WTC11 (cell line): ENCODE measurements at regions of chr22 and their contacts with region 1.

Region 1: DNA sequence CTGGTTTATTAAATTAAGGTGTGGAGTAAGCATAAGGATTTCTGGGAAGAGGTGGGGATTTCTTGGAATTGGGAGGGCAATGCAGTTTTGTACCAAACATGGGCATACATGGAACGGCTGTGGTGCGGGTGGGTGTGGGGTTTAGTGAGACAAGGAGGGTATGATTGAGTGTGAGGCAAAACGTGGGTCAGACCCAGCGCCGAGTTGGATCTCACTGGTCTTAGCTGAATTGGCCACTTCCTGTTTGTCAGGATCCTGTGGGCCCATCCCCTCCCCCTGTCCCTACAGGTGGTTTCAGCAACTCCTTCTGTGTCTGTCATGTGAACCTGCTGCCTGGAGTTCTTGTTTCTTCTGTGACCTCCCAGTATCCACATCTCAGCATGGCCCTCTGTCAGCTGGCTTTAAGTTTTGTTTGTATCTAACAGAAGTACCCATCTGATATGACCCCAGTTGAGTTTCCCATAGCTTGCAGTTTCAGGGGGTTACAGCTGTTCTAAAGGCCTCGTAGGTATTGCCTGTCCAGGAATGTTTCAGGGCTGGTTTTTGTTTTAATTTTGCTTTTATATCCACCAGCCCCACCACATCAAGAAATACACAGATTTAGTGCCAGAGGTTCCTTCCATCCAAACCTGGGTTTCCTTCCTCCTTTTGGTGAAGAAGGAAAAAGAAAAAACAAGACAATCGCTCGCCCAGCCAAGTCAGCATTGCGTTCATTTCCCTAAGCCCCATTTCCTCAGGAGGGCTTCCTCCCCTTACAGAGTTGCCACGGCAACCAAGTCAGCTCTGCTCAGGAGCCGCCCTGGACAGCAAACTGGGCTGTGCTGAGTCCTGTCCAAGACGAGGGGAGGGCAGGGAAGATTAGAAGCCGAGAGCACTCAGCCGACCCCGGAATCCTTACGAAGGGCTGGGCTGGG is 6.0 kb downstream of the APOL1 start:
- DNase-seq: peak; percentile 64
- ATAC-seq: peak; percentile 90
- H3K4me3 Mint-ChIP-seq: peak overlapping the region; percentile 25
- H3K27ac Mint-ChIP-seq: peak overlapping the region; percentile 94
- H3K4me1 Mint-ChIP-seq: peaks cover 35% of the 10 kb centered on the region
- H3K27me3 Mint-ChIP-seq: no peaks in the 10 kb centered on the region; the same call in 1 of the 2 replicates
- CTCF ChIP-seq: no peak

Region 2: DNA sequence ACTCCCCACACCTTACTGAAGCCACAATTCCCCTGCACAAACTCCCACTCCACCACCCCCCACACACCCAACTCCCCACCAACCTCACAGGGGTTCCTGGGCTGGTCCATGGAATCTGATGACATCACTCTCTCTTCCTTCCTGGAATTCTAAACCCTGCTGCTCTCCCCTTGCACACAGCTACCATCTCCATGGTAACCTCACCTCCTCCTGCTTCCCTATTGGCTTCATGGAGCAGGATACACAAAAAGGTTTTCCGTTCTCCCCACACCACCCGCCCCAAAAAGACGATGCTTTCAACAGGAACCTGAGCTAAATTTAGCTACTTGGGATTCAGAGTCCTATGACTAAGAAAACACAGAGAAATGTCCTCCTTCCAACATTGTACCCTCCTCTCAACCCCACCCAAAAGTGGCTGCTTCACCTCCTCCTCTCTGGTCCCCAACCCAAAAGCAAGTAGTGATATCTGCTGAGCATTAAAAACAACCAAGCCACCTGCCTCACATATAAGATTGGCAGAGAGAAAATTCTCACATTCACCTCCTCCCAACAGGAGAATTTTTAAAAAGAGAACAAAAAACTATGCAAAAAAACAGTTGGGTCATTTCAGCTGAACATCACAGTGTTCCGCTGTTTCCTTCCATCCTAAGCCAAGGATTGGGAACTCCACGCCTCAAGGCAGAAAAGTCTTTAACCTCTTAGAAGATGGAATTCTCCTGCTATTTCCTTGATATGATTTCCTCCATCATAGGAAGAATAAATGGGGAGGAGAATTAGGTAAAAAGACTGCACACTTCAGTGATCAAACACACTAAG is 297.3 kb before region 1 on chr22:
- CTCF ChIA-PET with region 1: no interaction called
- POLR2A ChIA-PET with region 1: no interaction called
- DNase-seq: peak; percentile 60
- ATAC-seq: peak; percentile 99
- H3K4me3 Mint-ChIP-seq: peak overlapping the region; percentile 32
- H3K27ac Mint-ChIP-seq: peak overlapping the region; percentile 91
- H3K4me1 Mint-ChIP-seq: peaks cover 48% of the 10 kb centered on the region
- H3K27me3 Mint-ChIP-seq: no peaks in the 10 kb centered on the region
- CTCF ChIP-seq: no peak

Region 3: DNA sequence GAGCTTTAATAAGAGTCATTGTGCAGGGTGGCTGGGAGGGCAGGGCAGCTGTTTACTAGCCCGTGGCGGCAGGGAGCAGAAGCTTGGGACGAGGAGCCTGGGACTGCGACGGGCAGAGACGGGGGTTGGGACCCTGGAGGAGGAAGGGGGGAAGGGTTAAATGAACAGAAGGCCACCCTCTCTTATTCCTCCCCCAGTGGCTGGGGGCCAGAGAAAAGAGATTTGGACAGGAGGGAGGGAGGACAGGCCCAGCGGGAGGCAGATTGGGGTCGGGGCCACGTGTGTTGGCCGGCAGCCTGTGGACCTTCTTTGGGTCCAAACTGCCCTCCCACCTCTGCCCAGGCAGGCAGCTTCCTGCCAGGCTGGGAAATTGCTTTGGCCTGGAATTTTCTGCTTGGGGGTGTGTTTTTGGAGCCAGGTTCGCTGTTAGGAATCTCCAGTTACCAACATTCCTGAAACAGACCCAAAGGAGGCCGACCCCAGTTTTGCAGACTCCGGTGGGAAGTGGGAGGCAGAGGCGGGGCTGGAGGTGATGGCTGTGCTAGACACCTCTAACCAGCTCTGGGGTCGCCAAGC is 148.6 kb before region 1 on chr22:
- CTCF ChIA-PET with region 1: no interaction called
- POLR2A ChIA-PET with region 1: no interaction called
- DNase-seq: peak; percentile 29
- ATAC-seq: peak; percentile 50
- H3K4me3 Mint-ChIP-seq: no peak overlapping the region
- H3K27ac Mint-ChIP-seq: no peak overlapping the region
- H3K4me1 Mint-ChIP-seq: peaks cover 3% of the 10 kb centered on the region
- H3K27me3 Mint-ChIP-seq: no peaks in the 10 kb centered on the region
- CTCF ChIP-seq: no peak

Region 4: DNA sequence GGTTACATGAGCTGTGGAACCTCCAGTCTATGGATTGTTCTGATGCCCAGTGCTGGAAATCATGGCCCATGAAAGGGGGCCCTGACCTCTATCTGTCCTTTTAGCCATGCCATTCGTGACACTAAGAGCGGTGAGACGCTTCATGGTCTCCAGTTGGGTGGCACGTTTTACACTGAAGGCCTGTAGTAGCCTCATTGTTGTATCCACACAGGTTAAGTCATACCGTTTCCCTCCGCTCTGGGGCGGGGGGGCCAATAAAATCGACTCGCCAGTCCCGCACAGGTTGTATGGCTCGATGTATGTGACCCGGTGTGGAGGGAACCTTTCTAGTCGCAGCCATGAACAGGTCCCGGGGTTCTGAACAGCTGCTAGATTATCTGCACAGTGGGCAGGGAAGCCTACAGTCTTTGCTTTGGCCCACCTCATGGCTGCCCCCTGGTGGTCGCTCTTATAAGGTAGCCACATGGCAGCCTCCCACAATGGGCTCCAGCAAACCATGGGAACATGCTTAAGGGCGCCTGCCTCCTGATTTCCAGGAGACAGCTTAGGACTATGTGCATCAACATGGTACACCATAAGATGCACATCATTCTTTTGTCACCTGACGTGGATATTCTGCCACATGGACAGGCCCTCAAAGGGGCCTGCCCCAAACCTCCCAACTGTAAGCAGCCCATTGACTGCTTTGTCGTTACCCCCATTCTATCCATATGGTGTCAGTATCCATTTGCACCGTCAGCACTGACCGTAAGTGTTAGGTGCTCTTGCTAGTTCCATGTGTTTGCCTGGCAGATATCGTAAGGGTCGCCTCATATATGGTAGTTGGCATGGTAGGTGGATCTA is 78.7 kb before region 1 on chr22:
- CTCF ChIA-PET with region 1: no interaction called
- POLR2A ChIA-PET with region 1: no interaction called
- DNase-seq: peak; percentile 91
- ATAC-seq: peak; percentile 96
- H3K4me3 Mint-ChIP-seq: no peak overlapping the region
- H3K27ac Mint-ChIP-seq: no peak overlapping the region
- H3K4me1 Mint-ChIP-seq: peaks cover 13% of the 10 kb centered on the region
- H3K27me3 Mint-ChIP-seq: no peaks in the 10 kb centered on the region
- CTCF ChIP-seq: peak; percentile 94

Region 5: GRCh38 chr22:36194971-36195370 is 64.0 kb before region 1 on chr22:
- CTCF ChIA-PET with region 1: interaction called, 10 read pairs
- POLR2A ChIA-PET with region 1: no interaction called
- DNase-seq: peak; percentile 73
- ATAC-seq: peak; percentile 86
- H3K4me3 Mint-ChIP-seq: no peak overlapping the region
- H3K27ac Mint-ChIP-seq: no peak overlapping the region
- H3K4me1 Mint-ChIP-seq: peaks cover 46% of the 10 kb centered on the region
- H3K27me3 Mint-ChIP-seq: peaks cover 4% of the 10 kb centered on the region
- CTCF ChIP-seq: peak; percentile 31

Region 6: DNA sequence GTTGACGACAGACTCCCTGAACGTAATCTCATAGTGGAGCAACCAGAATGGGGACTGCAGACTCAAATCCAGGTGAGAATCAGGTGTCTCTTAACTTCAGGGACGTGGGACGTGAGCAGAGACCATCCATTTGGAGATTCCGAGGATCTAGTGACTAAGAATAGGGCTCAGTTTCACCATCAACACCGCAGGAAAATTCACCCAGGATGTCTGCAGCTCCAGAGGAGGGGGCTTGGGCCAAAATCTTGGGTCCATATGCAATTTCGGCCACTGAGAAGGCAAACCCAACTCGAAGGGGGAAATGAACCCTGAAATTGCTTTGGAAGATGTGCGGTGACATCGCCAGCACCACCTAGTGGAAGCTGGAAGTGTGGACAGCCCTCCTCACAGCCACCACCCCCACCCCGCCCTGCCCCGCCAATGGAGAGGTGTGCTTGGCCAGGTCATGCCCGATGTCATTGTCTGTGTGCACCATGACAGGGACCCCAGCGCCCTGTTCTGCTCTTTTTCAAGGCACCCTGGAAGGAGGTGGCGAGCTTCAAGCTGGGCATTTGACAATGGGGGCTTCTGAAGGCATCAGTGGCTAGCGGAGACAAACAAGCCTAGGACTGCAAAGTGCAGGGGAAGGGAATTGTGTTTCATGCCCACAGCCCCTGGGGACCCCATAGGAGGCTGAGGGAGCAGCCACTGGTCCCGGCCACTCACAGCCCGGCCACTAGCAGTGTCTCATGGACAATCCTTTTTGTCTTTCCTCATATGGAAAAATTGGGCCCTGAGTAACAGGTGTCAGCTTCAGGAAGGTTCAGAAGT is 18.7 kb after region 1 on chr22:
- CTCF ChIA-PET with region 1: interaction called, 12 read pairs
- POLR2A ChIA-PET with region 1: no interaction called
- DNase-seq: peak; percentile 74
- ATAC-seq: peak; percentile 94
- H3K4me3 Mint-ChIP-seq: no peak overlapping the region; the same call in 1 of the 2 replicates
- H3K27ac Mint-ChIP-seq: peak overlapping the region; percentile 72
- H3K4me1 Mint-ChIP-seq: peaks cover 11% of the 10 kb centered on the region
- H3K27me3 Mint-ChIP-seq: no peaks in the 10 kb centered on the region
- CTCF ChIP-seq: peak; percentile 75